GM12878 (cell line): ENCODE measurements at regions of chr10 and their contacts with region 1.

Region 1: DNA sequence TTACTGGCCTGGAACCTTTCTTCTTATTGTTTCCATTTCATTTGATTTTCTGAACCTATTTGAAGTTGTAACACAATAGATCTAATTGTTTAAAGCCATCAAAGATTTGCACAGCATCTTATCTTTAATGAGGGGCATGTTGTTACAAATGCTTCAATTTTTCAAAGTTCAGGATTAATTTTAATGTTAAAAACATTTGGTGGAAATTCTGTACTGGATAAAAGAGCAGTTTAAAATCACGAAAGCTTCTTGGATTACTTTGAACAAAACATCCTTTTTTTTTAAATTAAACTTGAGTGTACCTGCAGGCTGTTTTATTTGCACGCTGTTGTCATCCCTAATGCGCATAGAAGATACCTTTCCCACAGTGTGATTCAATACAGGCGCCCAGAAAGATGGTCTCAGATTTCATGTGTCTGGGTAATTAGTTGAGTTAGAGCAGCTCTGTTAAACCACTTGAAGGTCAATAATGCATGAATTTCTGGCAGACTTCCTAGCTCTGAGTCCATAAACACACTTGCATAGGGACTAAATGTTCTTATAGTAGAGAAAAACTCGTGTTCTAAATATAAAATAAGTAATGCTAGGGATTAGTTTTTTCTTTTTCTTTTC is 29.3 kb upstream of the DDX50 start:
- DNase-seq: no peak
- ATAC-seq: no peak
- H3K4me3 ChIP-seq: no peak overlapping the region
- H3K27ac ChIP-seq: no peak overlapping the region
- H3K4me1 ChIP-seq: no peaks in the 10 kb centered on the region
- H3K27me3 ChIP-seq: no peaks in the 10 kb centered on the region
- CTCF ChIP-seq: no peak
- EP300 ChIP-seq: no peak
- POLR2A ChIP-seq: no peak
- RAD21 ChIP-seq: no peak

Region 2: GRCh38 chr10:68462536-68462935 is 409.3 kb before region 1 on chr10:
- CTCF ChIA-PET with region 1: no interaction called
- POLR2A ChIA-PET with region 1: no interaction called
- RAD21 ChIA-PET with region 1: no interaction called
- SMC1A ChIA-PET with region 1: no interaction called
- in situ Hi-C with region 1: no loop called
- intact Hi-C with region 1: no loop called
- DNase-seq: no peak
- ATAC-seq: peak; percentile 22; the same call in 1 of the 3 replicates
- H3K4me3 ChIP-seq: no peak overlapping the region
- H3K27ac ChIP-seq: no peak overlapping the region
- H3K4me1 ChIP-seq: no peaks in the 10 kb centered on the region
- H3K27me3 ChIP-seq: no peaks in the 10 kb centered on the region
- CTCF ChIP-seq: no peak
- EP300 ChIP-seq: no peak
- POLR2A ChIP-seq: no peak
- RAD21 ChIP-seq: no peak

Region 3: GRCh38 chr10:68813559-68813958 is 58.3 kb before region 1 on chr10:
- CTCF ChIA-PET with region 1: interaction called, 3 read pairs
- POLR2A ChIA-PET with region 1: interaction called, 10 read pairs
- RAD21 ChIA-PET with region 1: no interaction called
- SMC1A ChIA-PET with region 1: no interaction called
- in situ Hi-C with region 1: no loop called
- intact Hi-C with region 1: no loop called
- DNase-seq: no peak
- ATAC-seq: no peak
- H3K4me3 ChIP-seq: no peak overlapping the region
- H3K27ac ChIP-seq: no peak overlapping the region
- H3K4me1 ChIP-seq: no peaks in the 10 kb centered on the region
- H3K27me3 ChIP-seq: no peaks in the 10 kb centered on the region; a peak in 1 of 4 replicates
- CTCF ChIP-seq: no peak
- EP300 ChIP-seq: no peak
- POLR2A ChIP-seq: no peak
- RAD21 ChIP-seq: no peak